ENCODE measurements at regions of chr16 and their contacts with region 1.

Region 1: DNA sequence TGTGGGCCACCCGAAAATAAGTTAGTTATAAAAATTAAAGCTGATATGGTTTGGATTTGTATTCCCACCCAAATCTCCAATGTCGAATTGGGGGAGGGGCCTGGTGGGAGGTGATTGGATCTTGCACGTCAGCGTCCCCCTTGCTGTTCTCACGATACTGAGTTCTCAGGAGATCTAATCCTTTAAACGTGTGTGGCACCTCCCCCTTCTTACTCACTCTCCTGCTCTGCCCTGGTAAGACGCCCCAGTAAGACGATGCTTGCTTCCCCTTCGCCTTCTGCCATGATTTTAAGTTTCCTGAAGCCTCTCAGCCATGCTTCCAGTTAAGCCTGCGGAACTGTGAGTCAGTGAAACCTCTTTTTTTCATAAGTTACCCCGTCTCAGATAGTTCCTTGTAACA is 35.4 kb downstream of the SYCE1L start:
- DNase-seq: no peak
- H3K4me3 ChIP-seq: no peak overlapping the region
- H3K27ac ChIP-seq: no peak overlapping the region
- H3K4me1 ChIP-seq: peaks cover 0 to 7% (median 5%) of the 10 kb centered on the region in 4 donors
- H3K27me3 ChIP-seq: peaks cover 0 to 33% (median 0%) of the 10 kb centered on the region in 3 donors
- CTCF ChIP-seq: no peak
- EP300 ChIP-seq: no peak
- POLR2A ChIP-seq: no peak

Region 2: DNA sequence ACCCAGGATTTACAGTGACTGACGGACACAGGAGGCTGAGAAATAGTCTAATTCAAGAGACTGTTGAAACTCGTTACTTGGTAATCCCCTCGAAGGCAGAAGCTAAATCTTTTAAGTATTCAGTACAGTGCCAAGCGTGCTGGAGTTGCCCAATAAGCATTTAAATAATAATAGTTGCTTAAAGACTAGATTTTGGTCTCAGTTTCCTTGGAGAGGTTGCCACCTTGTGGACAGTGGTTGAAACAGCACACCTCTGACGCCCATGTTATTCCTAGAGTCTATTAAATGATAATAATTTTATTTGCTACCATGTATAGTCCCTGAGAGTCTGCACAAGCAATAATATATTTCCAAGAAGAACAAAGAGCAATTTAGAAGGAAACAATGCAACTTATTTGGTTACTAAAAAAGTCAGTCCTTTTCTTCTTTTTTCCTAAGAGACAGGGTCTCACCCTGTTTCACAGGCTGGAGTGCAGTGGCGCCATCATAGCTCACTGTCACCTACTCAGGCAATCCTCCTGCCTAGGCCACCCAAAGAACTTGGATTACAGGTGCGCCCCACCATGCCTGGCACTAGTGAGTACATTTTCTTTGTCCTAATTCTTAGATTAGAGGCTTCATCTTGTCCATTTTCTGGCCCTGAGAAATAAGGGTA is 349.7 kb after region 1 on chr16:
- intact Hi-C with region 1: loop called (anchors 2 kb)
- DNase-seq: peak; percentile 48 to 79
- H3K4me3 ChIP-seq: no peak overlapping the region
- H3K27ac ChIP-seq: no peak overlapping the region
- H3K4me1 ChIP-seq: no peaks in the 10 kb centered on the region
- H3K27me3 ChIP-seq: peaks cover 0 to 55% (median 0%) of the 10 kb centered on the region in 3 donors
- CTCF ChIP-seq: peak in 5 of 7 experiments; percentile 68 to 91 (median 85)
- EP300 ChIP-seq: no peak
- POLR2A ChIP-seq: no peak

Measured in stomach (tissue), 19 donors.